CD4-positive, alpha-beta T cell (primary cell): ENCODE measurements at regions of chr4 and their contacts with region 1.

Region 1: GRCh38 chr4:5399790-5400421 is 308.5 kb downstream of the EVC2 start:
- DNase-seq: no peak
- ATAC-seq: no peak
- H3K4me3 ChIP-seq: no peak overlapping the region
- H3K4me3 Mint-ChIP-seq: no peak overlapping the region
- H3K27ac ChIP-seq: no peak overlapping the region
- H3K27ac Mint-ChIP-seq: no peak overlapping the region
- H3K4me1 ChIP-seq: no peaks in the 10 kb centered on the region
- H3K4me1 Mint-ChIP-seq: no peaks in the 10 kb centered on the region
- H3K27me3 ChIP-seq: no peaks in the 10 kb centered on the region
- H3K27me3 Mint-ChIP-seq: no peaks in the 10 kb centered on the region
- CTCF ChIP-seq: no peak

Region 2: DNA sequence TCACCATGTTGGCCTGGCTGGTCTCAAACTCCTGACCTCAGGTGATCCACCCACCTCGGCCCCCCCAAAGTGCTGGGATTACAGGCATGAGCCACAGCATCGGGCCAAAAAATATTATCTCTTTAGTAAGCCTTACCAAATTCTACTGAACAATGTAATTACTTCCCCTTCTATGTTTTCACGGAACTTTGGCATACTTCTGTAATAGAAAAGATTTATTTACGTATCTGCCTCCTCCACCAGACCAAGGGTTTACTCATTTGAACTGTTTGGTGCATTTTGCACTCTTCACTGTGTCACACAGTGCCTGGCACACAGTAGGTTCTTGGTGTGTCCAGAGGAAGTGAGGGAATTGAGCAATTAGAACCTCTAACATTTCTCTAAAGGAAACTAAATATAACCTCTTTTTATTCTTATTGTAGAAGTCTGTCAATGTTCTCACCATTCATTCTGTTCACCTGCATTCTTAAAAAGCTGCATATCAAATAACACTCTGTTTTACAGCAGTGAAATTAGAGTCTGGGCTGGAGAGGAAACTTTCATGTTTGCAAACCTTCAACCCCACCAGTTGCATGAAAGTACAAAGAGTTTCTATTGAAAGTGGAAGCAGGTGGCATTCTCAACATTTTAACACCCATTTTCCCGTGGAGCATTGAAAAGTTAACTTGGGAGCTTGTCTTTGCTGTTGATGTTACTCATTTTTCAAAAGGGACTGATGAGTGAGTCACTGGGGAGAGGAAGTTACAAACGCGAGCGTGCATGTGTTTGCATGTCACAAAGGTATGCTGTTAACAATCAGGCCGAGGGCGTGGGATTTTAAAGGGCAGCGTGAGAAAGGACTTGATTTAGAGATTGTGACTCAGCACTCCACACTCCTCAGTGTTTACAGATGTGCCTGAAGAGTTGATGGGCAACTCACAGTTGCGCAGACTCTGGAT is 34.6 kb before region 1 on chr4:
- CTCF ChIA-PET with region 1: no interaction called
- POLR2A ChIA-PET with region 1: no interaction called
- intact Hi-C with region 1: loop called in 1 of 2 experiments (anchors 2 kb)
- DNase-seq: no peak
- ATAC-seq: no peak
- H3K4me3 ChIP-seq: no peak overlapping the region
- H3K4me3 Mint-ChIP-seq: no peak overlapping the region
- H3K27ac ChIP-seq: no peak overlapping the region
- H3K27ac Mint-ChIP-seq: no peak overlapping the region
- H3K4me1 ChIP-seq: no peaks in the 10 kb centered on the region
- H3K4me1 Mint-ChIP-seq: no peaks in the 10 kb centered on the region
- H3K27me3 ChIP-seq: no peaks in the 10 kb centered on the region
- H3K27me3 Mint-ChIP-seq: no peaks in the 10 kb centered on the region
- CTCF ChIP-seq: no peak